Common myeloid progenitor, CD34-positive (primary cell): ENCODE measurements at regions of chr15 and their contacts with region 1.

Region 1: GRCh38 chr15:94324117-94324826 is 92.9 kb downstream of the MCTP2 start:
- DNase-seq: peak; percentile 83 to 91 (median 87)
- H3K4me3 ChIP-seq: no peak overlapping the region
- H3K27ac ChIP-seq: no peak overlapping the region
- H3K4me1 ChIP-seq: peaks cover 6 to 32% (median 29%) of the 10 kb centered on the region in 4 experiments
- H3K27me3 ChIP-seq: no peaks in the 10 kb centered on the region

Region 2: GRCh38 chr15:94163999-94164807 is 160.1 kb before region 1 on chr15:
- CTCF ChIA-PET with region 1: interaction called, 222 read pairs
- POLR2A ChIA-PET with region 1: interaction called, 10 read pairs
- DNase-seq: peak; percentile 71 to 87 (median 79)
- H3K4me3 ChIP-seq: no peak overlapping the region
- H3K27ac ChIP-seq: no peak overlapping the region
- H3K4me1 ChIP-seq: peaks cover 0 to 8% (median 7%) of the 10 kb centered on the region in 4 experiments
- H3K27me3 ChIP-seq: no peaks in the 10 kb centered on the region

Region 3: GRCh38 chr15:94230956-94231722 is 93.1 kb before region 1 on chr15 and contains the start of gene MCTP2:
- CTCF ChIA-PET with region 1: interaction called, 22 read pairs
- POLR2A ChIA-PET with region 1: interaction called, 13 read pairs
- DNase-seq: peak; percentile 92 to 97 (median 96)
- H3K4me3 ChIP-seq: peak within 1 kb of the TSS; percentile 87 to 96 (median 90)
- H3K27ac ChIP-seq: peak within 1 kb of the TSS; percentile 84 to 93
- H3K4me1 ChIP-seq: peaks cover 37 to 66% (median 58%) of the 10 kb centered on the region in 4 experiments
- H3K27me3 ChIP-seq: no peaks in the 10 kb centered on the region

Region 4: DNA sequence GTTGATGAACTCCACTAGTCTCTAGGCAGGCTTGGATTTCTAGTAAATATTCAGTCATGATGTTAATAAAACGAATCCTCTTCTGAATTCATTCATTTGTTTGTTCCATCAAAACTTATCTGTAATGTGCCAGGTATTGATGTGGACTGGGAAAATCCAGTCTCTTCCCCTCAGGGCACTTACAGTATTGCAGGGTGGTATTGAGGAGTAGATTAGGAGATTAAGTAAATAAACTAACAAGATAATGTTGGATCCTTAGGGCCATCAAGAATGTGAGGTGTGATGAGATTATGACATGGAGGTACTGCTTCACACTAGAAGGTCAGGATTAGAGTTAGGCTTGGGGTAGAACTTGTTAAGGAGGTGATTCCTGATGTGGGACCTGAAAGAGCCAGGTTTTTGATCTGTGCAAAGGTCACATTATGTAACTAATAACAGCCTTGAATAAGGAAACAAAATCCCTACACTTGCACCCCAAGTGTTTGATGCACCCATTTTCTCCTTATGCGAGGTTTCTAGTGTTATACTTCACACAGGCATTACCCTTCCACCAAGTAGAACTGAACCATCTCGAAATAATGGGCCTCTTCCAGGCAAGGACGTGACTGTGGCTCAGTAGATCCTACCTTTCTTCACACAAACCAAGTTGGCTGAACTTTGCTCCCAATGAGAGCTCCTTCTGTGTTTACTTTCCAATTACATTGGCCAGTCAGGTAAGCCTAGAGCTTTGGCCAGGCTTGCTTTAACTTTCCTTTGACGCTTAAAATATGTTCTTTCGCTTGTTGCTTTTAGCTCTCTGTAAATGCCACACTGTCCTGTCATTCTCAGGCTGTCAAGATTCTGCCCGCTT is 76.3 kb before region 1 on chr15:
- CTCF ChIA-PET with region 1: interaction called, 19 read pairs
- POLR2A ChIA-PET with region 1: no interaction called
- DNase-seq: no peak
- H3K4me3 ChIP-seq: no peak overlapping the region
- H3K27ac ChIP-seq: no peak overlapping the region
- H3K4me1 ChIP-seq: peaks cover 4 to 19% (median 8%) of the 10 kb centered on the region in 4 experiments
- H3K27me3 ChIP-seq: no peaks in the 10 kb centered on the region

Region 5: DNA sequence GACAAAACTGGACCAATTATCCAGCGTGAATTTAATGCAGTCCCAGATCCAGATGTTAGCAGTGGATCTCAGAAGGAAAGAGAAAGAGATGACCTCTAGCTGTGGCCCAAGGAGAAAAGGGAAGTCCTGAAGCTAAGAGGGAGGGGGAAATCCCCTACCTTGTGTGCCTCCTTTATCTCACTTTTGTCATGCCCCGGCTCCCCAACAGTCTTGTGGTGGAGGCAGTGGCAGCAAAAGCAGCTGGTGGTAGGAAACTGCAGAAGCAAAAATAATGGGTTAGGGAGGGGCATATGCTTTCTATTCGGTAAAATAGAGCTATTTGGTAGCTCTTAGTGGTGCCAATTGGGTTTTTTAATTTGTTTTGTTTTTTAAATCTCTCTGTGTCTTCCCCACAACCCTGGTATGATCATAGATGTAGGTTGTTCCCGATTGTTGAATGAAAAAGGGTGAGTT is 36.5 kb before region 1 on chr15:
- CTCF ChIA-PET with region 1: interaction called, 41 read pairs
- POLR2A ChIA-PET with region 1: interaction called, 8 read pairs
- DNase-seq: peak; percentile 91 to 99 (median 97)
- H3K4me3 ChIP-seq: peak overlapping the region in 6 of 7 experiments; percentile 32 to 70 (median 44)
- H3K27ac ChIP-seq: peak overlapping the region; percentile 76 to 91
- H3K4me1 ChIP-seq: peaks cover 42 to 71% (median 52%) of the 10 kb centered on the region in 4 experiments
- H3K27me3 ChIP-seq: no peaks in the 10 kb centered on the region

Region 6: GRCh38 chr15:94306700-94307650 is 17.3 kb before region 1 on chr15:
- CTCF ChIA-PET with region 1: interaction called, 84 read pairs
- POLR2A ChIA-PET with region 1: no interaction called
- DNase-seq: peak; percentile 71 to 93 (median 79)
- H3K4me3 ChIP-seq: peak overlapping the region in 1 of 7 experiments; percentile 21
- H3K27ac ChIP-seq: peak overlapping the region; percentile 47 to 72
- H3K4me1 ChIP-seq: peaks cover 11 to 49% (median 34%) of the 10 kb centered on the region in 4 experiments
- H3K27me3 ChIP-seq: no peaks in the 10 kb centered on the region